ENCODE measurements at regions of chr2 and their contacts with region 1.

Region 1: DNA sequence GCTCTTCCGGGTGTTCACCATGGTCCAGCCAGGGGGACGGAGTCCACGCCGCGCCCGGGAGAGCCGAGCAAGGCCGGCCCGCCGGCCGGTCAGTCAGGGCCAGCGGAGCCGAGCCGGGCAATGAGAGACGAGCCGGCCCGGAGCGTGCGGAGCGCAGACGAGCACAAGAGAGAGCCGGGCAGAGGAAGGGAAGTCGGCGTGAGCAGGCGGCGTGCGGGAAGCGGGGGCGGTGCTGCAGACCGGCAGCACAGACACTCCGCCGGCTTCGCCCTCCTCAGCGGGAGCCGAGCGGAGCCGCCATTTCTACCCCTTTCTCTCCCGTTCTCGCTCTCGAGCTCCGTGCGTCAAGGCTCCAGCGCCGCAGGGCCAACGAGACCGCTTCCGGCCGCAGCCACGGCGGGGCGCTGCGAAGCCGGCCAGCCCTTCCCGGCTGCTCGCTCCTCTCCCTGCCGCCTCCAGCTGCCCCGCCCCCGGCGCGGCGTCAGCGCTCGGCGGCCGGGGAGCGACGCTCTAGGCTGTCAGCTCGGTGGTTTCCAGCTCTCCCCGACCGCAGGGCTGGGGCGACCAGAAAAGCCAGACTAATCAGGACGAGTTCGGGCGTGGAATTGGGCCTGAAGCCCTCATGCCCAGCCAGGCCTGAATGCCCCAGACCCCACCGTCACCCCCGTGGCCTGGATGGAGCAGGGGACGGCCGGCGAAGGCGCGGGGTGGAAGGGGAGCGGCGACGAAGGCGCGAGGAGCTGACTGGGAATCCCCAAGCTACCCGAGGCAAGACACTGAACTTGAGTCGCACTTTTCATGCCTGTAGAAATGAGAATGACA is at the start of gene ATAD2B:
- DNase-seq: peak; percentile 84 to 94
- H3K4me3 ChIP-seq: peak within 1 kb of the TSS; percentile 76 to 95
- H3K27ac ChIP-seq: peak within 1 kb of the TSS; percentile 97 to 98
- H3K4me1 ChIP-seq: peaks cover 0 to 16% of the 10 kb centered on the region in 2 donors
- H3K27me3 ChIP-seq: no peaks in the 10 kb centered on the region
- CTCF ChIP-seq: peak; percentile 70 to 96 (median 94)
- POLR2A ChIP-seq: peak; percentile 64 to 79
- total RNA-seq, gene ATAD2B: 14.1 to 67.5 (median 32.3) TPM

Region 2: GRCh38 chr2:24075915-24076848 is 149.2 kb after region 1 on chr2 and contains the start of gene SF3B6:
- intact Hi-C with region 1: loop called (anchors 10 kb)
- DNase-seq: peak; percentile 97 to 98
- H3K4me3 ChIP-seq: peak within 1 kb of the TSS; percentile 64 to 79
- H3K27ac ChIP-seq: peak within 1 kb of the TSS; percentile 87 to 95
- H3K4me1 ChIP-seq: no peaks in the 10 kb centered on the region
- H3K27me3 ChIP-seq: no peaks in the 10 kb centered on the region
- CTCF ChIP-seq: peak in 2 of 4 experiments; percentile 21 to 28
- POLR2A ChIP-seq: peak; percentile 51 to 70
- total RNA-seq, gene SF3B6: 55.0 to 99.0 (median 77.1) TPM